ENCODE measurements at regions of chr6 and their contacts with region 1.

Region 1: GRCh38 chr6:126033696-126034095 is 47.4 kb downstream of the TRMT11 start:
- DNase-seq: peak; percentile 47
- H3K4me3 ChIP-seq: no peak overlapping the region
- H3K27ac ChIP-seq: no peak overlapping the region
- H3K4me1 ChIP-seq: no peaks in the 10 kb centered on the region
- H3K27me3 ChIP-seq: no peaks in the 10 kb centered on the region
- CTCF ChIP-seq: peak; percentile 50

Region 2: GRCh38 chr6:126170978-126171382 is 137.3 kb after region 1 on chr6:
- intact Hi-C with region 1: loop called (anchors 10 kb)
- DNase-seq: peak; percentile 43
- H3K4me3 ChIP-seq: no peak overlapping the region
- H3K27ac ChIP-seq: no peak overlapping the region
- H3K4me1 ChIP-seq: no peaks in the 10 kb centered on the region
- H3K27me3 ChIP-seq: no peaks in the 10 kb centered on the region
- CTCF ChIP-seq: peak; percentile 23

Region 3: DNA sequence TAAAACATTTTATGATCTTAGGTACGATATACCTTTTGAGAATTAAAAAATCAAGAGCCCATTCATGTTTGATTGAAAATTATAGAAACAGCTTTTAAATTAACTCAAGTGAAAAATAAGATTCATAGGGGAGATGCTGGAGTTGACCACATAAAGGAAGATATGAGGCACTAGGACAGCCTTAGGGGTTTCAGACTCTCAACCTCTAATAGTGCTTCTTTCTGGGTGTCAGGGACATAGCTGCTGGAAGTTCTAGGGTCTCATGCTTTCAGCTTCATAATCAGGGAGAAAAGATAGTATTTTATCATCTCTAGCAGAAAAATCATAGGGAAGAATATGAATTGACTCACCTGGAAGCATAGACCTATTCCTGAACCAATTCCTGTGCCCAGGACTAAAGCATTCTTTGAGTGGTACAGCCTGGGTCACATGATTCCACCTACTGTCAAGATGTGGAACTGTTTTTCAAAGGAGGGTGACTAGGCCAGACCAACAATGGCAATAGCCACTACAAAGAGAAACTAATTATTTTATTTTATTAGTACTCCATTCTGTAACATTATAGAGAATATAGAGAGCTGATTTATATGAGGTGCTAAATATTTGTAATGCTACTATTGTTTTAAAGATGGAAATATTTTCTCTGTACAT is 278.4 kb after region 1 on chr6:
- intact Hi-C with region 1: loop called (anchors 10 kb)
- DNase-seq: no peak
- H3K4me3 ChIP-seq: no peak overlapping the region
- H3K27ac ChIP-seq: no peak overlapping the region
- H3K4me1 ChIP-seq: no peaks in the 10 kb centered on the region
- H3K27me3 ChIP-seq: no peaks in the 10 kb centered on the region
- CTCF ChIP-seq: peak; percentile 36

Region 4: GRCh38 chr6:126339796-126340609 is 306.3 kb after region 1 on chr6 and contains the start of gene CENPW:
- intact Hi-C with region 1: loop called (anchors 10 kb)
- DNase-seq: peak; percentile 96
- H3K4me3 ChIP-seq: peak within 1 kb of the TSS; percentile 48
- H3K27ac ChIP-seq: peak within 1 kb of the TSS; percentile 37
- H3K4me1 ChIP-seq: peaks cover 4% of the 10 kb centered on the region
- H3K27me3 ChIP-seq: no peaks in the 10 kb centered on the region
- CTCF ChIP-seq: no peak
- total RNA-seq, gene CENPW: 21.2 to 77.9 TPM